Mammary epithelial cell (primary cell): ENCODE measurements at regions of chr7 and their contacts with region 1.

Region 1: DNA sequence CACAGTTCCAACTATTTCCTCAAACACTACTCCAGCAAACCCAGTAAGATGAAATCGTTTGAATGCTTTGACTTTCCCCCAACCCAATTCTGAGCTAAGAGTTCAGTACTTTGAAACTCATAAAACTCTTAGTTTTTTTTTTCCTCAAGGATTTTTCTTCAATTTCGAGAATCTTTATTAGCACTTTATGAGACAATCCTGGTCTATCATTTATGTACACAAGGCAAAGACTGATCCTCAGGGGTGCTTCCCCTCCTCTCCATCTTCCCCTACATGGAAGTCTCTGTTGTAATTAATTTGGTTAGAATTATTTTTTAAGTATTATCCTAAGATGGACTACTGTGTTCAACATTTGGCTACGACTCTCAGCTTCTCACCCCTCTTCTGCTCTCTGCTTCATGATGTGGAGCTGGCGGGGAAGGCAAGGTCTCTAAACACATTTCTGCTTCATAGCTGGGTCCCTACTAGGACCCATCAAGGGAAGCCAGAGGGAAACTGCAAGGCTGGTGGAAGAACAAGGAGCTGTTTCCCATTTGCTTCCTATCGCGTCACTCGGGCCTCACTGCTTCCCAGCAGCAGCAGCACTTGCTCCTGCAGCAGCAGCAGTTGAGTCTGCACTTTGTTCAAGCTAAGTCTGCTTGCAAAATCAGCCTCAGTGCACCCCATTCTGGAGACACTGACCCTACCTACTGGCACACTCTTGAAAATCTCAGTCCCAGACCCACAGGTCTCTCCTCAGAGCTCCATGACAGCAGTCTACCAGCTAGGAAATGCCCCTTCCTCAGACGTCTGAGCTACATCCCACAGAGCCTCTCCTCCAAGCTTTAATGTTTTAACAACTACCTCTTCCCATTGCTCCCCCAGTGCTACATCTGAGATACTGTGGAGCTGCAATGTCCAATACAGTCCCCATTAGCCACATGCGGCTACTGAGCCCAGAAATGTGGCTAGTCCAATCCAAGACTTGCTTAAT is 90.0 kb downstream of the CHCHD3 start:
- DNase-seq: no peak
- H3K4me3 ChIP-seq: no peak overlapping the region
- H3K27ac ChIP-seq: no peak overlapping the region
- H3K4me1 ChIP-seq: no peaks in the 10 kb centered on the region
- H3K27me3 ChIP-seq: no peaks in the 10 kb centered on the region
- CTCF ChIP-seq: no peak

Region 2: GRCh38 chr7:132899833-132900232 is 92.1 kb before region 1 on chr7:
- CTCF ChIA-PET with region 1: no interaction called
- dilution Hi-C with region 1: loop called (anchors 5 kb)
- in situ Hi-C with region 1: no loop called
- intact Hi-C with region 1: no loop called
- DNase-seq: no peak
- H3K4me3 ChIP-seq: no peak overlapping the region
- H3K27ac ChIP-seq: no peak overlapping the region
- H3K4me1 ChIP-seq: no peaks in the 10 kb centered on the region
- H3K27me3 ChIP-seq: no peaks in the 10 kb centered on the region
- CTCF ChIP-seq: peak in 1 of 2 donors; percentile 29

Region 3: GRCh38 chr7:133310232-133310862 is 318.4 kb after region 1 on chr7:
- CTCF ChIA-PET with region 1: no interaction called
- dilution Hi-C with region 1: no loop called
- in situ Hi-C with region 1: no loop called
- intact Hi-C with region 1: no loop called
- DNase-seq: no peak
- H3K4me3 ChIP-seq: no peak overlapping the region
- H3K27ac ChIP-seq: no peak overlapping the region
- H3K4me1 ChIP-seq: no peaks in the 10 kb centered on the region
- H3K27me3 ChIP-seq: no peaks in the 10 kb centered on the region
- CTCF ChIP-seq: no peak